ENCODE measurements at regions of chr3 and their contacts with region 1.

Region 1: GRCh38 chr3:185937689-185938463 is at the start of gene TRA2B:
- DNase-seq: peak; percentile 97 to 99 (median 98)
- ATAC-seq: peak; percentile 88
- H3K4me3 ChIP-seq: peak within 1 kb of the TSS; percentile 96
- H3K4me3 Mint-ChIP-seq: peak within 1 kb of the TSS; percentile 97
- H3K27ac ChIP-seq: peak within 1 kb of the TSS; percentile 100
- H3K27ac Mint-ChIP-seq: peak within 1 kb of the TSS; percentile 98
- H3K4me1 ChIP-seq: peaks cover 7% of the 10 kb centered on the region
- H3K4me1 Mint-ChIP-seq: peaks cover 54% of the 10 kb centered on the region
- H3K27me3 ChIP-seq: no peaks in the 10 kb centered on the region
- H3K27me3 Mint-ChIP-seq: no peaks in the 10 kb centered on the region
- CTCF ChIP-seq: no peak
- total RNA-seq, gene TRA2B: 549 to 585 TPM

Region 2: DNA sequence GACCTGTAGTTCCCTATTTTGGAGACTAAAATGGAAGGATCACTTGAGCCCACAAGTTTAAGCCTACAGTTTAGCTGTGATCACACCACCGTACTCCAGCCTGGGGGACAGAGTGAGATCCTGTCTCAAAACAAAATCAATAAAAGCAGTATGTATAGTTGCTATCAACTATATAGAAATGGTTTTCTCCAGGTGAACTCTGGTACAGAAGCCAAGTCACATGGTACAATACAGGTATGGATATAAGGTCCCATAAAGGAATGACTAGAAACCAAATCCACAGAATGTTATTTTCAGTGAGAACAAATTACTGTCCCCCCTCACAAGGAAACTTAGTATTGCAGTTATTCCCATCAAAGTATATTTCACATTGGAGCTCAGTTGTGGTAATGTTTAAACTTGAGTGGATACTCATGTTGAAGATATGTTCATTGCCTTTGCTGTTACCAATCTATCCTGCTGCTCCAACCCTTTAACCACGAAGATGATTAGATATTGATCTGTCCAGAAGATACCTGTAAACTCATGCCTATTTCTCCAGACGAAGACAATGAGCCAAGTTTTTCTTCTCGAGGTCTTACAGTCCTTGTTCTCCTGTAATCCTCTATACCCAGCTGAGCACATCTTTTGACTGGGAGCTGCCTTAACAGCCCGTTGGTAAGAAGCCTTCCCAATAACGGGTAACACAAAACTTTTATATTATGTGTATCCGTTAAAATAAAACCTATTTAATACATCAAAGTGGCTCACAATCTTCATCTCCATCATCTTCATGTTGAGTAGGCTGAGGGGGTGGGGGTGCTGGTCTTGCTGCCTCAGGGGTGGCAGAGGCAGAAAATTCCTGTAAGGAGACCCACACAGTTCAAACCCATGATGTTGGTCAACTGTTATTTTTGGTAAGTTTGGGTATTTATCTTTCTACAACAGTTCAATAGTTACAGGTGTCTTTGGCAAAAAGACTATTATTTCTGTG is 24.7 kb before region 1 on chr3:
- CTCF ChIA-PET with region 1: interaction called, 3 read pairs
- POLR2A ChIA-PET with region 1: interaction called, 23 read pairs
- intact Hi-C with region 1: loop called in 1 of 2 experiments (anchors 2 kb)
- DNase-seq: no peak
- ATAC-seq: peak; percentile 21
- H3K4me3 ChIP-seq: no peak overlapping the region
- H3K4me3 Mint-ChIP-seq: peak overlapping the region; percentile 12
- H3K27ac ChIP-seq: no peak overlapping the region
- H3K27ac Mint-ChIP-seq: peak overlapping the region; percentile 75
- H3K4me1 ChIP-seq: no peaks in the 10 kb centered on the region
- H3K4me1 Mint-ChIP-seq: peaks cover 15% of the 10 kb centered on the region
- H3K27me3 ChIP-seq: no peaks in the 10 kb centered on the region
- H3K27me3 Mint-ChIP-seq: no peaks in the 10 kb centered on the region
- CTCF ChIP-seq: no peak

Region 3: DNA sequence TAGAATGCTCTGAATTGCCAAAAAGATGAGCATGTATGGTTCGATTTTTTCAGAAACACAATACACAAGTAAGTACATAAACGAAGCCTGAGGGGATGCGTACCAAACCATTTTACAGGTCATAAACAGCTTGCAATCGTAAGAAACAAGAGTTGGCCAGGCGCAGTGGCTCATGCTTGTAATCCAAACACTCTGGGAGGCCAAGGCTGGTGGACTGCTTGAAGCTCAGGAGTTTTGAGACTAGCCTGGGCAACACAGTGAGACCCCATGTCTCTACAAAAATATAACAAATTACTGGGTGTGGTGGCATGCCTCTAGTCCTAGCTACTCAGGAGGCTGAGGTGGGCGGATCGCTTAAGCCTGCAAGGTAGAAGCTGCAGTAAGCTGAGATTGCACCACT is 13.5 kb before region 1 on chr3:
- CTCF ChIA-PET with region 1: interaction called, 24 read pairs
- POLR2A ChIA-PET with region 1: interaction called, 116 read pairs
- intact Hi-C with region 1: loop called in 1 of 2 experiments (anchors 1 kb)
- DNase-seq: no peak
- ATAC-seq: no peak
- H3K4me3 ChIP-seq: no peak overlapping the region
- H3K4me3 Mint-ChIP-seq: no peak overlapping the region
- H3K27ac ChIP-seq: no peak overlapping the region
- H3K27ac Mint-ChIP-seq: peak overlapping the region; percentile 56
- H3K4me1 ChIP-seq: peaks cover 26% of the 10 kb centered on the region
- H3K4me1 Mint-ChIP-seq: peaks cover 63% of the 10 kb centered on the region
- H3K27me3 ChIP-seq: no peaks in the 10 kb centered on the region
- H3K27me3 Mint-ChIP-seq: no peaks in the 10 kb centered on the region
- CTCF ChIP-seq: no peak

Region 4: GRCh38 chr3:185959609-185960517 is 22.0 kb after region 1 on chr3:
- CTCF ChIA-PET with region 1: interaction called, 20 read pairs
- POLR2A ChIA-PET with region 1: interaction called, 23 read pairs
- intact Hi-C with region 1: no loop called
- DNase-seq: peak in 3 of 14 experiments; percentile 13 to 43 (median 35)
- ATAC-seq: peak; percentile 78
- H3K4me3 ChIP-seq: no peak overlapping the region
- H3K4me3 Mint-ChIP-seq: peak overlapping the region; percentile 50
- H3K27ac ChIP-seq: no peak overlapping the region
- H3K27ac Mint-ChIP-seq: no peak overlapping the region
- H3K4me1 ChIP-seq: peaks cover 13% of the 10 kb centered on the region
- H3K4me1 Mint-ChIP-seq: no peaks in the 10 kb centered on the region
- H3K27me3 ChIP-seq: no peaks in the 10 kb centered on the region
- H3K27me3 Mint-ChIP-seq: peaks cover 5% of the 10 kb centered on the region
- CTCF ChIP-seq: no peak

Region 5: DNA sequence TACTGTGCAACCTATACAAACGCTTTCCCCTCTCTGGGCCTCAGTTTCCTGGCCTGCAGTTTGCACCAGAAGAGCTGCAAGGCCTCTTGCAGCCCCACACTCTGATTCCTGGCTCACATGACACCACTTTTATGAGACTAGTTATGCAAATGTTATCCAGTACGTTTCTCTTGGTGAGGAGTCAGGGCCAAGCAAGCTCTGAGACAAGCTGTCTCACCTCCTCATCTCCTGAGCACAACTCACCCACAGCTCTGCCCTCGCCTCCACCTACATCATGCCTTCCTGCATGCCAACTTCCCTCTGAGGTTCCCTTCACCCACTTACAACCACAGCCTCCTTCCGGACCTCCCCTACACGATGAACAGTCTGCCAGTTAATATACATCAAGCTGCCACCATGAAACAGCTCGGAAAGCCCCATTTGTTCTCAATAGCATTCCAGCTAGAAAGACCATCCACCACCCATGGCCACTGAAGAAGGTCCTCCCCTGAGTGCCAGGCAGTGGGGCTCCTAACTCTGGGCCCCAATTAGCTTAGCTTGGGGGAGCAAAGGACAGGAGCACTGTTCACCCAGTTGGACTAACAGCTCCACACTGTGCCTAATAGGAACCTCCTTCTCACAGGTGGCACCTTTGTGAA is 581.3 kb after region 1 on chr3:
- CTCF ChIA-PET with region 1: no interaction called
- POLR2A ChIA-PET with region 1: interaction called, 16 read pairs
- intact Hi-C with region 1: no loop called
- DNase-seq: peak; percentile 50 to 91 (median 60)
- ATAC-seq: peak; percentile 96
- H3K4me3 ChIP-seq: no peak overlapping the region
- H3K4me3 Mint-ChIP-seq: peak overlapping the region; percentile 46
- H3K27ac ChIP-seq: peak overlapping the region; percentile 58 to 65
- H3K27ac Mint-ChIP-seq: peak overlapping the region; percentile 78
- H3K4me1 ChIP-seq: peaks cover 74% of the 10 kb centered on the region
- H3K4me1 Mint-ChIP-seq: peaks cover 66% of the 10 kb centered on the region
- H3K27me3 ChIP-seq: no peaks in the 10 kb centered on the region
- H3K27me3 Mint-ChIP-seq: no peaks in the 10 kb centered on the region
- CTCF ChIP-seq: no peak

Region 6: DNA sequence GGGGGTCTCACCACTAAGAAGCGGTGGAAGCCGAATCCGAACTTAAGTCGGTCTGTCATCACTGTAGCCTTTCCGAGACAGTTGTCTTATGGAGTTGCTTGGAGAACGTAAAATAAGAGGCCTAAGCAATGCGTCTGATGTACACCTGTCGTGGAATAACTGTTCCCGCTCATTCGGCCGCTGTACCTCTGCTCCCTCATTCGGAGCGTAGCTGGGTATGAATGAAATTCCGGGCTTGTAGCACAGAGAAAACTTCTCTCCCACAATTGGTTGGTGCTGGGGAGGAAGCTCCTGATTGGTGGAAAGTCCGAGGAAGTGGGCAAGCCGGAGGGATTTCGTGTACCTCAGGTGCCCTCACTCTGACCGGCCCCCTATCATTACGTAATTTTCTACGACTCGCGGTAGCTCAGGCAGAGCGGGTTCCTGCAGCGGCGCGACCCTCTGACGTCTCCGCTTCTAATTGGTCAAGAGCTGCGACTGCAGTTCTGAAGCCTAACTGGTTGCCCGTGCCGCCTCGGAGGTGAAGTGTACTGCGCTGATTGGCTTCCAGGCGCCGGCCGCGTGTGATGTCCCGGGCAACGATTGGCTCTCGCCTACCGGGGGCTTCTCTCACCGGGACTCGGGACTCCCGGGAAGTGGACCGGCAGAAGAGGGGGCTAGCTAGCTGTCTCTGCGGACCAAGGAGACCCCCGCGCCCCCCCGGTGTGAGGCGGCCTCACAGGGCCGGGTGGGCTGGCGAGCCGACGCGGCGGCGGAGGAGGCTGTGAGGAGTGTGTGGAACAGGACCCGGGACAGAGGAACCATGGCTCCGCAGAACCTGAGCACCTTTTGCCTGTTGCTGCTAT is 632.4 kb after region 1 on chr3 and contains the start of gene DNAJB11:
- CTCF ChIA-PET with region 1: interaction called, 4 read pairs
- POLR2A ChIA-PET with region 1: interaction called, 59 read pairs
- intact Hi-C with region 1: loop called (anchors 1 to 2 kb)
- DNase-seq: peak; percentile 91 to 100 (median 97)
- ATAC-seq: peak; percentile 83
- H3K4me3 ChIP-seq: peak within 1 kb of the TSS; percentile 79
- H3K4me3 Mint-ChIP-seq: peak within 1 kb of the TSS; percentile 99
- H3K27ac ChIP-seq: peak within 1 kb of the TSS; percentile 90 to 94
- H3K27ac Mint-ChIP-seq: peak within 1 kb of the TSS; percentile 94
- H3K4me1 ChIP-seq: peaks cover 37% of the 10 kb centered on the region
- H3K4me1 Mint-ChIP-seq: peaks cover 69% of the 10 kb centered on the region
- H3K27me3 ChIP-seq: no peaks in the 10 kb centered on the region
- H3K27me3 Mint-ChIP-seq: no peaks in the 10 kb centered on the region
- CTCF ChIP-seq: no peak
- total RNA-seq, gene DNAJB11: 69.3 to 70.3 TPM

Region 7: GRCh38 chr3:186790261-186790981 is 852.5 kb after region 1 on chr3:
- CTCF ChIA-PET with region 1: no interaction called
- POLR2A ChIA-PET with region 1: interaction called, 3 read pairs
- intact Hi-C with region 1: loop called in 1 of 2 experiments (anchors 5 kb)
- DNase-seq: peak in 1 of 14 experiments; percentile 9
- ATAC-seq: peak; percentile 19
- H3K4me3 ChIP-seq: no peak overlapping the region
- H3K4me3 Mint-ChIP-seq: peak overlapping the region; percentile 26
- H3K27ac ChIP-seq: no peak overlapping the region
- H3K27ac Mint-ChIP-seq: peak overlapping the region; percentile 96
- H3K4me1 ChIP-seq: peaks cover 26% of the 10 kb centered on the region
- H3K4me1 Mint-ChIP-seq: peaks cover 52% of the 10 kb centered on the region
- H3K27me3 ChIP-seq: no peaks in the 10 kb centered on the region
- H3K27me3 Mint-ChIP-seq: no peaks in the 10 kb centered on the region
- CTCF ChIP-seq: no peak